ENCODE measurements at regions of chr2 and their contacts with region 1.

Region 1: DNA sequence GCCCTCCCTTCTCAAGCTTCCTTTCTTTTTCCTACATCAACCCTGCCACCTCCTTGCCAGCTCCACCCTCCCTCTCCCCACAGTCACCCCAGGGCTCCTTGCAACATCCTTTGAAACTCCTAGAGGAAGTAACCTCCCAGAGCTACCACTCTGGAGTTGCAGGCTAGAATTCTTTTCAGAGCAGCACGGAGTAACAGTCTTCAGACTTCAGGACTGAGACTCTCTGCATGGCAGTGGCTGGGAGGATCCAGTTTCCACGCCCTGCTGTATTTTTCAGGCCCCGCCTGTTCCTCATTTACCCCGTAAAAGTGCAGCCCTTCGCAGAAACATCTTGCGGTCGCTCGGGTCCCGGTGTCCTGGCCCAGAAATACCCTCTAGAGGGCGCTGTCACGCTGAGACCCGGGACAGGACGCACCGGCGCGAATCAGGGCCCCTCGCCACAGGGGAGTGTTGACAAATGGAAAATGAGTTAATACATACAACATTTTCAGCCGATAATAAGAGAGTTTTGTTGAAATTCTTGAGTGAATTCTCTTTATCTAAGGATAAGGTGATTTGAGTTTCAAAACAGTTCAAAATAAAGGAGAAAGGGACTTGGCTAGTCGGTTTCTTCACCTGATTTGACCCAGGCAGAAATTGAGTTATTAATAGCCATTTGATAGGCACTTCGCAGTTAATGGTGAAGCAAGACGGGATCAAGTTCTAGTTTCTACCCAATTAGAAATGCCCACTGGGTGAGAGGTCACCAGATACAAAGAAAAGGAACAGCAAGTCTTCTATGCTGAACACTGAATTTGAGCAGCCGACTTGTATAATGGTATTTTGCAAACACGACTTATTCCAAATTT is 18.5 kb upstream of the NTSR2 start:
- DNase-seq: peak; percentile 87 to 92 (median 89)
- ATAC-seq: peak; percentile 96
- H3K4me3 ChIP-seq: no peak overlapping the region
- H3K27ac ChIP-seq: no peak overlapping the region
- H3K4me1 ChIP-seq: peaks cover 0 to 6% of the 10 kb centered on the region in 2 experiments; a peak in 3 of 5 replicates
- H3K27me3 ChIP-seq: peaks cover 3 to 26% of the 10 kb centered on the region in 2 experiments; a peak in 3 of 5 replicates
- CTCF ChIP-seq: peak; percentile 89 to 94 (median 93)
- EP300 ChIP-seq: no peak
- POLR2A ChIP-seq: no peak
- RAD21 ChIP-seq: peak; percentile 76 to 79

Region 2: GRCh38 chr2:11716689-11717321 is 28.4 kb after region 1 on chr2:
- CTCF ChIA-PET with region 1: no interaction called
- POLR2A ChIA-PET with region 1: no interaction called
- in situ Hi-C with region 1: no loop called
- intact Hi-C with region 1: no loop called
- DNase-seq: no peak
- ATAC-seq: no peak
- H3K4me3 ChIP-seq: no peak overlapping the region
- H3K27ac ChIP-seq: no peak overlapping the region
- H3K4me1 ChIP-seq: peaks cover 3 to 9% of the 10 kb centered on the region in 2 experiments; a peak in 4 of 5 replicates
- H3K27me3 ChIP-seq: peaks cover 13 to 46% of the 10 kb centered on the region in 2 experiments
- CTCF ChIP-seq: no peak
- EP300 ChIP-seq: no peak
- POLR2A ChIP-seq: no peak
- RAD21 ChIP-seq: no peak

Region 3: DNA sequence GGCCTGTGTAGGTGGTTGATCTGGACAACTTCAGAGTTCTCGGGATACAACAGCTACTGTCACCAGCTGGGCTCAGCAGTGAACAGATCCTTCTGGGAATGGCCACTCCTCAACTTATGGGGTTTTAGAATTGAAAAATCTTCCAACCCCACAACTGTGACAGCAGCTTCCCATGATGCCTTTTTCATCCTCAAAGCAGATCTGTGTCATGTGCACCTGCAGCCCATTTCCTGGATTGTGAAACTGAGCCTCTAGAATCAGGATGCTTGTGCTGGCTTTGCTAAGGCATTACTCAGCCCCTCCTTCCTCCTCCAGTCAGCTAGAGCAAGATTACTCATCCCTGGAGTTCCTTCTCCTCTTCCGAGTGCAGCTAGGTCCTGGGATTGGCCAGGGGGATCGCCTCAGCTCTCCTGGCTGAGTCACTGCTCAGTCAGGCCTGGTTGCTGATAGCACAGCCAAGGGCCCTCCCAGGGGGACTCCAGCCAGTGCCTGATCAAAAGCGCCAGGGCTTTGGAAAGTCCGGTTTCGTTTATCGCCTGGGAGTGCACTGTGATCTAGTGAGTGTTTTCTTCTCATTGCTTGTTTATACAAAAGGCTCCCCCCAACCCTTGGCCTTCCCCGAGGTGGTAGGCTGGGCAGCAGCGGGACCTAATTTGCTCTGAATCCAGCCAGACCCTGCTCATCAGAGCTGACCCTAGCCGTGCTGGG is 55.6 kb after region 1 on chr2:
- CTCF ChIA-PET with region 1: interaction called, 3 read pairs
- POLR2A ChIA-PET with region 1: no interaction called
- in situ Hi-C with region 1: no loop called
- intact Hi-C with region 1: loop called (anchors 2 kb)
- DNase-seq: peak; percentile 96 to 98 (median 97)
- ATAC-seq: peak; percentile 85
- H3K4me3 ChIP-seq: peak overlapping the region; percentile 33
- H3K27ac ChIP-seq: peak overlapping the region; percentile 86
- H3K4me1 ChIP-seq: peaks cover 58 to 66% of the 10 kb centered on the region in 2 experiments; a peak in 4 of 5 replicates
- H3K27me3 ChIP-seq: no peaks in the 10 kb centered on the region
- CTCF ChIP-seq: 0 out of 6 replicates have a peak, but pooled peaks of 1 of the 3 experiments have one; percentile 15
- EP300 ChIP-seq: peak; percentile 90
- POLR2A ChIP-seq: no peak; the same call in 1 of the 2 replicates
- RAD21 ChIP-seq: no peak

Region 4: GRCh38 chr2:11784747-11785610 is 96.5 kb after region 1 on chr2:
- CTCF ChIA-PET with region 1: interaction called, 39 read pairs
- POLR2A ChIA-PET with region 1: interaction called, 3 read pairs
- in situ Hi-C with region 1: loop called (anchors 5 kb)
- intact Hi-C with region 1: no loop called
- DNase-seq: peak; percentile 45 to 72 (median 66)
- ATAC-seq: peak; percentile 96
- H3K4me3 ChIP-seq: no peak overlapping the region
- H3K27ac ChIP-seq: no peak overlapping the region
- H3K4me1 ChIP-seq: peaks cover 0 to 9% of the 10 kb centered on the region in 2 experiments; a peak in 2 of 5 replicates
- H3K27me3 ChIP-seq: no peaks in the 10 kb centered on the region
- CTCF ChIP-seq: peak; percentile 61 to 92 (median 70)
- EP300 ChIP-seq: no peak
- POLR2A ChIP-seq: no peak
- RAD21 ChIP-seq: peak; percentile 22 to 62; a peak in 3 of 4 replicates